ENCODE measurements at regions of chr9 and their contacts with region 1.

Region 1: DNA sequence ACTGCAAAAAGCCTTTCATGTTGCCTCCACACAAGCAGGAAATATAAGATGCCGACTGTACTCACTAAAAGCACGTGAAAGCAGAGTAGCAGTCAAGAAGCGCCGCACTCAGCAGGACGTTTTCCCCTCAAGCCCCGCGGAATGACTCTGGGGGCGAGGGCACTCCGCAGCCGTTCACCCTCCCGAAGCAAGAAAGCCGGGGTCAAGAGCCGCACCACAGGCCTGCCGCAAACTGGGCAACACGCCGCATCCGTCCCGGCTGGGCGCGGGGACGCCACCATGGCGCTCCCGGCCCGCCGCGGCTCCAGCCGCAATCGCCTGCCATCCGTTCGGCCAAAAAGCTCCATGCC is 364 bp downstream of the RPS6 start:
- DNase-seq: no peak
- ATAC-seq: peak; percentile 19
- H3K4me3 Mint-ChIP-seq: peak overlapping the region; percentile 98
- H3K27ac Mint-ChIP-seq: peak overlapping the region; percentile 99
- H3K4me1 Mint-ChIP-seq: peaks cover 34% of the 10 kb centered on the region
- H3K27me3 Mint-ChIP-seq: no peaks in the 10 kb centered on the region
- CTCF ChIP-seq: no peak

Region 2: GRCh38 chr9:19048966-19049916 is 330.4 kb before region 1 on chr9 and contains the start of gene RRAGA:
- CTCF ChIA-PET with region 1: no interaction called
- POLR2A ChIA-PET with region 1: interaction called, 7 read pairs
- intact Hi-C with region 1: loop called (anchors 10 kb)
- DNase-seq: peak; percentile 96
- ATAC-seq: peak; percentile 93
- H3K4me3 Mint-ChIP-seq: peak within 1 kb of the TSS; percentile 98
- H3K27ac Mint-ChIP-seq: peak within 1 kb of the TSS; percentile 97
- H3K4me1 Mint-ChIP-seq: peaks cover 26% of the 10 kb centered on the region
- H3K27me3 Mint-ChIP-seq: no peaks in the 10 kb centered on the region
- CTCF ChIP-seq: peak; percentile 71
- total RNA-seq, gene RRAGA: 53.6 to 56.3 TPM

Region 3: DNA sequence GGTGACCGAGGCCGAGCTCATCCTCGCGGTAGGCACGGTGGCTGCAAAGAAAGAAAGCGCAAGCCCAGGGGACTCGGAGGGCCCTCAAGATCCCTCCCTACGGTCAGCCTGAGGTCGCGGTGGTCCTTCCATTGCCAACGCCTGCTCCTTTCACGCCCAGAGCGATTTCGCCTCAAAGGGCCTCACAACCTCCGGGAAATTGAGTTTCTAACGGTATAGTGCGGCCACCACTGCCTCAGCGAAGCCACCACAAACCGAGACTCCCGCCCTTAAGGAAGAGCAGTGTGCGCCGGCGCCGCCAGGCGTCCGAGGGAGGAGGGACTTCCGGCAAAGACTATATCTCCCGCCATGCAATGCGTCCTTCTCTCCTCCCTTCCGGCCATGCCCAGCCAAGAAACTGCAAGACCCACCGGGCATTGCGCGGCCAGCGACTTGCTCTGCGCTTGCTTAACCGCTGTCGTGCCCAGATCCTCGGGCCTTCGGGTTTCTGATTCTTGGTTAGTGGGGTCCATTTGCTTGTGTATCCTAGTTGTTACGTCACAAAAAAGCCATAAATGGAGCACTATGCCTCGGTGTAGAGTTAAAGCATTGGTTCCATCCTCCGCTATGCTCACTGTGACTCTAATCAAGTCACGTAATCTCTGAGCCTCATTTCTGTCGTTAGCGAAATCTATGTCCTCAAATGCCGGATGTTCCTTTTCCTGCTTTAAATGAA is 276.9 kb before region 1 on chr9 and contains the start of gene HAUS6:
- CTCF ChIA-PET with region 1: no interaction called
- POLR2A ChIA-PET with region 1: interaction called, 3 read pairs
- intact Hi-C with region 1: loop called (anchors 5 kb)
- DNase-seq: peak; percentile 98
- ATAC-seq: peak; percentile 96
- H3K4me3 Mint-ChIP-seq: peak within 1 kb of the TSS; percentile 98
- H3K27ac Mint-ChIP-seq: peak within 1 kb of the TSS; percentile 97
- H3K4me1 Mint-ChIP-seq: peaks cover 21% of the 10 kb centered on the region
- H3K27me3 Mint-ChIP-seq: no peaks in the 10 kb centered on the region
- CTCF ChIP-seq: peak; percentile 36
- total RNA-seq, gene HAUS6: 30.8 to 35.8 TPM

Region 4: DNA sequence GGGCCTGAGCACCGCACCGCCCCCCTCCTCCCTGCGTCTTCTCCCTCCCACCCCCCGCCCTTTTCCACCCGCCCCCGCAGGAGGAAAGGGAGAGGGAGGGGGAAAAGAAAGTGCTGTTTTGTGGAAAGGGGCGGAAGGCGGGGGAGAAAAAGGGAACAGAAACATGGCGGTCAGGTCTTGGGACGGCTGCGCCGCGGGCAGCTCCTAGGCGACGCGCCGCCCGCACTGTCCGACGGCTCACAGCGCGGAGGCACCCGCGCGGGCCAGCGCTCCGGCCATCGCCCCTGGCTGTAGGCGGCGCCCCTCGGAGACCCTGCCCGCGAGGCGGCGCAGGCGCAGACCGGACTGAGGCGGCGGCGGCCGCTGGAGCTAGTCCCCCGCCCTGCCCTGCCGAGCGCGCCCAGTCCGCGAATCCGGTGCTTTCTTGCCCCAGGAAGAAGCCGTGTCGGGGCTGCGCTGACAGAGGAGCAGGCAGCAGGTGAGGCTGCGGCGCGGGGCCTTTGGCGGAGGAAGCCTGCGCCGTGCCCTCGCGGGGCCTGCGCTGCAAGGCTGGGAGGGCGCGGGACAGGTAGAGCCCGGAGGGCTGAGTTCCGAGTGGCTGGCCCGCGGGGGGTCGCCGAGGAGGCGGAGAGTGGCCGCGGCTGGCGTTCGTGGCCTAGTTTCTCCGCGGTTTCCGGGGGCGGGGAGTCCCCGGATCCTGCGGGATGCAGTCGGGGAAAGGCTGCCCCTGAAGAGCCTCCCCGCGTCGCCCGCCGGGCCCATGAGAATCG is 149.1 kb before region 1 on chr9 and contains the start of gene DENND4C:
- CTCF ChIA-PET with region 1: no interaction called
- POLR2A ChIA-PET with region 1: interaction called, 9 read pairs
- intact Hi-C with region 1: loop called (anchors 5 kb)
- DNase-seq: peak; percentile 86
- ATAC-seq: peak; percentile 86
- H3K4me3 Mint-ChIP-seq: no peak within 1 kb of the TSS
- H3K27ac Mint-ChIP-seq: peak within 1 kb of the TSS; percentile 71
- H3K4me1 Mint-ChIP-seq: peaks cover 17% of the 10 kb centered on the region
- H3K27me3 Mint-ChIP-seq: no peaks in the 10 kb centered on the region
- CTCF ChIP-seq: peak; percentile 16
- total RNA-seq, gene DENND4C: 17.4 to 18.5 TPM

Region 5: DNA sequence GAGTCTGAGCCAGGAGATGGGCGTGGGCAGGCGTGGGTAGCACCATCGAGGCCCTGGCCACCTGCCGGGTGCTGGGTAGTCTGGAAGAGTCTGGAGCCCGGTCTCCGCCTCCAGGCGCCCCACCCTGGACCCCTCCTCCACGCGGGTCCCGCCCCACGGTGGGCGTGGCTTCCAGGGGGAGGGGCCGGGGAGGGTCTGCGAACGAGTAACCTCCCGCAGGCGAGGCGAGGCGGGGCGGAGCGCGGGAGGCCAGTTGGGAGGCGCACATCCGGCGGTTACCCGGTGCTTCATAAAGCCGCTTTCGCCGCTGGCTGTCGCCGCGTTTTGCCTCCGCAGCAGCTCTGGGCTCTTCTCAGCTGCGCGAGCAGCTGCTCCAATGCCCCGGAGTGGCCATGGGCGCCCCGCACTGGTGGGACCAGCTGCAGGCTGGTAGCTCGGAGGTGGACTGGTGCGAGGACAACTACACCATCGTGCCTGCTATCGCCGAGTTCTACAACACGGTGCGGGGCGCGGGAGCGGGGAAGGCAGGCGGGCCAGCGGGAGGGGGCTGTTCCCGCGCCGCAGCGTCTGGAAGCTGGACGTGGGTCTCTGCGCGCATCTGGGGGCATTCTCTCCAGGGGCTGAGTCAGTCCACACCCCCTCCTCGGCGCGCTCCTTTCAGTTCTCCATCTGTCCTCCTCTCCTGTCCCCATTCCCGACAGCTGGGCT is 29.2 kb after region 1 on chr9 and contains the start of gene ACER2:
- CTCF ChIA-PET with region 1: no interaction called
- POLR2A ChIA-PET with region 1: interaction called, 21 read pairs
- intact Hi-C with region 1: loop called (anchors 2 kb)
- DNase-seq: peak; percentile 93
- ATAC-seq: peak; percentile 98
- H3K4me3 Mint-ChIP-seq: peak within 1 kb of the TSS; percentile 97
- H3K27ac Mint-ChIP-seq: peak within 1 kb of the TSS; percentile 77
- H3K4me1 Mint-ChIP-seq: peaks cover 10% of the 10 kb centered on the region
- H3K27me3 Mint-ChIP-seq: no peaks in the 10 kb centered on the region
- CTCF ChIP-seq: no peak
- total RNA-seq, gene ACER2: 1.2 to 1.4 TPM

Region 6: GRCh38 chr9:19441730-19442129 is 62.1 kb after region 1 on chr9:
- CTCF ChIA-PET with region 1: no interaction called
- POLR2A ChIA-PET with region 1: interaction called, 10 read pairs
- intact Hi-C with region 1: no loop called
- DNase-seq: no peak
- ATAC-seq: peak; percentile 74
- H3K4me3 Mint-ChIP-seq: peak overlapping the region; percentile 57
- H3K27ac Mint-ChIP-seq: peak overlapping the region; percentile 64
- H3K4me1 Mint-ChIP-seq: peaks cover 10% of the 10 kb centered on the region
- H3K27me3 Mint-ChIP-seq: no peaks in the 10 kb centered on the region
- CTCF ChIP-seq: no peak

Region 7: DNA sequence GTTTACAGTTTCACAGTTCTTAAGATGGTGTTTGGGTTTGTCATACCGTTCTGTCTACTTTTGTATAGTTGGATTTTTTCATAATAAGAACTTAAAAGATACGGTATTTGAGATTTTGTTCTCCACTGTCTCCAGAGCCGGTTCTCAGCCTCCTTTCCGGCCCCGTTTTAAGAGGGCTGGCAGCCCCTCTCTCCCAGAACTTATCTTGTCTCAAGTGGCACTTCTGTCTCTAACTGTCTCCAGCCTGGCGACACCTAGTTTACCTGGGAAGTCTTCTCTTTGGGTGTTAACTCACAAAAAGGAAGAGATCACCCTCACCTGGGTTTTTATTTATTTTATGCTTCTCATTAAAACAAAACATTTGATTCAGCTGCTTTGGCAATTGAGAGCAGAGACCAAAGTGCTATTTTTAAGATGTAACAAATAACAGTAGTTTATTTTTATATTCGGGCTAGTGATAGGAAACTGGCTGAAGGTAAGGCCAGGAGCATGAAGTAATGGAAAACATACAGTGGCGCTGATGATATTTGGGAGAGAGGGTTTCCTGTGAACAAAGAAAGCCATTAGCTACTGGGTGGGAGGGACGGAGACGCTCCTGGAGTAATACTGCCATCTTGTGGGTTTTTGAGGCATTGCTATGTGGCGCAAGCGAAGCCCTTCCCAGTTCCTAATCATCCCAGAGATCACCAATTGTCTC is 77.5 kb after region 1 on chr9:
- CTCF ChIA-PET with region 1: interaction called, 5 read pairs
- POLR2A ChIA-PET with region 1: interaction called, 5 read pairs
- intact Hi-C with region 1: loop called (anchors 2 kb)
- DNase-seq: peak; percentile 67
- ATAC-seq: peak; percentile 94
- H3K4me3 Mint-ChIP-seq: peak overlapping the region; percentile 47
- H3K27ac Mint-ChIP-seq: no peak overlapping the region
- H3K4me1 Mint-ChIP-seq: peaks cover 8% of the 10 kb centered on the region
- H3K27me3 Mint-ChIP-seq: no peaks in the 10 kb centered on the region
- CTCF ChIP-seq: peak; percentile 97

Measured in activated CD8-positive, alpha-beta T cell treated with anti-CD3 and anti-CD28 coated beads for 36 hours (primary cell).